Sigmoid colon (tissue), 7 donors: ENCODE measurements at regions of chr15 and their contacts with region 1.

Region 1: DNA sequence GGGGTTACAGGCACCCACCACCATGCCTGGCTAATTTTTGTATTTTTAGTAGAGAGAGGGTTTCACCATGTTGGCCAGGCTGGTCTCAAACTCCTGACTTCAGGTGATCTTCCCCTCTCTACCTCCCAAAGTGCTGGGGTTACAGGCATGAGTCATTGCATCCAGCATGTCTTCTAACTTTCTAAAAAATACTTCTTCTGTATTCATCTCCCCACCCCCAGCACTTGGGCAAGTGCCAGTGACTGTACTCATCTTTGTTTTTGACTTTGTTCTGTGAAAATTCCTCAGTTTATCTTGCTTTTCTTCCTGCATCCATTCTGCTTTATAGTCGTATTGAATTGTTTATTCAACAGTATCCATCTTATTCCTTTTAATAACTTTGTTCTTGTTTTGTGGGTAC is 47.6 kb downstream of the ARIH1 start:
- DNase-seq: no peak
- H3K4me3 ChIP-seq: no peak overlapping the region
- H3K27ac ChIP-seq: no peak overlapping the region
- H3K4me1 ChIP-seq: peaks cover 0 to 17% (median 8%) of the 10 kb centered on the region in 4 donors
- H3K27me3 ChIP-seq: no peaks in the 10 kb centered on the region
- CTCF ChIP-seq: no peak
- EP300 ChIP-seq: no peak
- POLR2A ChIP-seq: no peak

Region 2: GRCh38 chr15:72487070-72487797 is 34.4 kb before region 1 on chr15:
- intact Hi-C with region 1: loop called (anchors 5 kb)
- DNase-seq: no peak
- H3K4me3 ChIP-seq: no peak overlapping the region
- H3K27ac ChIP-seq: no peak overlapping the region
- H3K4me1 ChIP-seq: peaks cover 0 to 82% (median 59%) of the 10 kb centered on the region in 4 donors
- H3K27me3 ChIP-seq: no peaks in the 10 kb centered on the region
- CTCF ChIP-seq: no peak
- EP300 ChIP-seq: no peak
- POLR2A ChIP-seq: no peak

Region 3: GRCh38 chr15:72585476-72586082 is 63.9 kb after region 1 on chr15:
- intact Hi-C with region 1: no loop called
- DNase-seq: no peak
- H3K4me3 ChIP-seq: no peak overlapping the region
- H3K27ac ChIP-seq: no peak overlapping the region
- H3K4me1 ChIP-seq: no peaks in the 10 kb centered on the region
- H3K27me3 ChIP-seq: no peaks in the 10 kb centered on the region
- CTCF ChIP-seq: no peak
- EP300 ChIP-seq: no peak
- POLR2A ChIP-seq: no peak